ENCODE measurements at regions of chr7 and their contacts with region 1.

Region 1: DNA sequence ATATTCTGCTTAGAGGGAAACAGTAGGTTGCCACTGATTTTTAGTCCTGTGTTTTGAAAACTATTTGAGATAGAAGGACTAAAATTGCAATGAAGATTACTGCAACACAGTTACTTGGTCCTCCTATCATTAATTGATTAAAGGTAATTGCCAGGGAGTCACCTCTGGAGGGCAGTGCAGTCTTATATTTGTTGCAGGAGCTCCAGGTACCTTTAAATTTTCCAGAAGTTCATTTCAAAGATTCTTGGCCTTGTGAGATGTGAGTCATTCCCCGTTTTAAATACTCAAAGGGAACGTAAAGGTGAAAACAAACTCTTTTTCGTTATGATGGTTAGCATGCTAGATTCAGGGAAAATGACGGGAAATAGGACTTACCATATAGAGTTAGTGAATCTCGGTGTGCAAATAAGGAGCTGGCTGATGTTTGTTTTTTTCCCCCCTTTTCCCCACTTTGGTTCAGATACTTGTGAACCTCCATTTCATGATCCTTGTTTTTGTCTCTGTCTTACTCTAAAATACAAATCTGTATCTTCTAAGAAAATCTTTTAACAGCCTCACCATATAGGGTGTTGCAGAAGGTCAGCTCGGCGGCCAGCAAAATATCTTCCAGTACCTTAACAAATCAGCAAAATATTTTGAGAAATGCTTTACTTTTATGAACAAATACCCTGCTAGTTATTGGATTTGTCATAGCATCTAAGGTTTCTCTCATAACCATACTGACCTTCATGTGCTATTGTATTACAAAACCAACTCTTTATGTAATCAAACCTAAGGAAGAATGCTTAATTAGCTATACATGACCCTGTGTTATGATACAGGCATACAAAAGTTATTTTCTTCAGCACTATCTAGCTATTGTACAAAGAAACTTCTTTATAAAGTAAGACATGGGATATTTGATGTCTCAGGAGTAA is 143.0 kb upstream of the HDAC9 start:
- DNase-seq: peak; percentile 59
- H3K4me3 ChIP-seq: no peak overlapping the region; a peak in 1 of 4 replicates
- H3K27ac ChIP-seq: peak overlapping the region in 1 of 2 experiments; percentile 39; a peak in 2 of 4 replicates
- H3K4me1 ChIP-seq: peaks cover 8 to 36% of the 10 kb centered on the region in 2 experiments; a peak in 3 of 4 replicates
- H3K27me3 ChIP-seq: no peaks in the 10 kb centered on the region
- CTCF ChIP-seq: peak; percentile 97
- EP300 ChIP-seq: no peak
- RAD21 ChIP-seq: peak; percentile 99

Region 2: GRCh38 chr7:18471476-18472160 is 119.0 kb after region 1 on chr7:
- CTCF ChIA-PET with region 1: interaction called, 13 read pairs
- POLR2A ChIA-PET with region 1: no interaction called
- DNase-seq: peak; percentile 38
- H3K4me3 ChIP-seq: no peak overlapping the region
- H3K27ac ChIP-seq: peak overlapping the region in 1 of 2 experiments; percentile 95; a peak in 2 of 4 replicates
- H3K4me1 ChIP-seq: peaks cover 0 to 27% of the 10 kb centered on the region in 2 experiments; a peak in 2 of 4 replicates
- H3K27me3 ChIP-seq: no peaks in the 10 kb centered on the region
- CTCF ChIP-seq: no peak
- EP300 ChIP-seq: peak in 1 of 2 experiments; percentile 84; a peak in 2 of 4 replicates
- RAD21 ChIP-seq: 0 out of 2 replicates have a peak, but pooled peaks have one; percentile 18

Region 3: GRCh38 chr7:18583305-18583704 is 230.7 kb after region 1 on chr7:
- CTCF ChIA-PET with region 1: interaction called, 495 read pairs
- POLR2A ChIA-PET with region 1: no interaction called
- DNase-seq: no peak
- H3K4me3 ChIP-seq: no peak overlapping the region
- H3K27ac ChIP-seq: 0 out of 4 replicates have a peak overlapping the region, but pooled peaks of 1 of the 2 experiments have one; percentile 6
- H3K4me1 ChIP-seq: peaks cover 9 to 16% of the 10 kb centered on the region in 2 experiments; a peak in 3 of 4 replicates
- H3K27me3 ChIP-seq: no peaks in the 10 kb centered on the region
- CTCF ChIP-seq: no peak
- EP300 ChIP-seq: no peak
- RAD21 ChIP-seq: no peak

Region 4: GRCh38 chr7:18655912-18656311 is 303.3 kb after region 1 on chr7:
- CTCF ChIA-PET with region 1: interaction called, 10 read pairs
- POLR2A ChIA-PET with region 1: no interaction called
- DNase-seq: no peak
- H3K4me3 ChIP-seq: no peak overlapping the region
- H3K27ac ChIP-seq: no peak overlapping the region; a peak in 1 of 4 replicates
- H3K4me1 ChIP-seq: peaks cover 0 to 5% of the 10 kb centered on the region in 2 experiments
- H3K27me3 ChIP-seq: no peaks in the 10 kb centered on the region
- CTCF ChIP-seq: no peak
- EP300 ChIP-seq: no peak
- RAD21 ChIP-seq: no peak

Region 5: GRCh38 chr7:18693406-18693805 is 340.8 kb after region 1 on chr7:
- CTCF ChIA-PET with region 1: interaction called, 12 read pairs
- POLR2A ChIA-PET with region 1: no interaction called
- DNase-seq: peak; percentile 25
- H3K4me3 ChIP-seq: no peak overlapping the region
- H3K27ac ChIP-seq: peak overlapping the region in 1 of 2 experiments; percentile 95; a peak in 2 of 4 replicates
- H3K4me1 ChIP-seq: peaks cover 0 to 45% of the 10 kb centered on the region in 2 experiments; a peak in 3 of 4 replicates
- H3K27me3 ChIP-seq: no peaks in the 10 kb centered on the region
- CTCF ChIP-seq: peak; percentile 97
- EP300 ChIP-seq: peak in 1 of 2 experiments; percentile 46; a peak in 1 of 4 replicates
- RAD21 ChIP-seq: peak; percentile 99

Region 6: GRCh38 chr7:18939771-18940592 is 587.4 kb after region 1 on chr7:
- CTCF ChIA-PET with region 1: no interaction called
- POLR2A ChIA-PET with region 1: no interaction called
- DNase-seq: no peak
- H3K4me3 ChIP-seq: no peak overlapping the region
- H3K27ac ChIP-seq: peak overlapping the region; percentile 37 to 89; a peak in 2 of 4 replicates
- H3K4me1 ChIP-seq: peaks cover 0 to 25% of the 10 kb centered on the region in 2 experiments; a peak in 2 of 4 replicates
- H3K27me3 ChIP-seq: no peaks in the 10 kb centered on the region
- CTCF ChIP-seq: no peak
- EP300 ChIP-seq: peak in 1 of 2 experiments; percentile 77; a peak in 2 of 4 replicates
- RAD21 ChIP-seq: no peak